Mammary epithelial cell (primary cell): ENCODE measurements at regions of chr9 and their contacts with region 1.

Region 1: DNA sequence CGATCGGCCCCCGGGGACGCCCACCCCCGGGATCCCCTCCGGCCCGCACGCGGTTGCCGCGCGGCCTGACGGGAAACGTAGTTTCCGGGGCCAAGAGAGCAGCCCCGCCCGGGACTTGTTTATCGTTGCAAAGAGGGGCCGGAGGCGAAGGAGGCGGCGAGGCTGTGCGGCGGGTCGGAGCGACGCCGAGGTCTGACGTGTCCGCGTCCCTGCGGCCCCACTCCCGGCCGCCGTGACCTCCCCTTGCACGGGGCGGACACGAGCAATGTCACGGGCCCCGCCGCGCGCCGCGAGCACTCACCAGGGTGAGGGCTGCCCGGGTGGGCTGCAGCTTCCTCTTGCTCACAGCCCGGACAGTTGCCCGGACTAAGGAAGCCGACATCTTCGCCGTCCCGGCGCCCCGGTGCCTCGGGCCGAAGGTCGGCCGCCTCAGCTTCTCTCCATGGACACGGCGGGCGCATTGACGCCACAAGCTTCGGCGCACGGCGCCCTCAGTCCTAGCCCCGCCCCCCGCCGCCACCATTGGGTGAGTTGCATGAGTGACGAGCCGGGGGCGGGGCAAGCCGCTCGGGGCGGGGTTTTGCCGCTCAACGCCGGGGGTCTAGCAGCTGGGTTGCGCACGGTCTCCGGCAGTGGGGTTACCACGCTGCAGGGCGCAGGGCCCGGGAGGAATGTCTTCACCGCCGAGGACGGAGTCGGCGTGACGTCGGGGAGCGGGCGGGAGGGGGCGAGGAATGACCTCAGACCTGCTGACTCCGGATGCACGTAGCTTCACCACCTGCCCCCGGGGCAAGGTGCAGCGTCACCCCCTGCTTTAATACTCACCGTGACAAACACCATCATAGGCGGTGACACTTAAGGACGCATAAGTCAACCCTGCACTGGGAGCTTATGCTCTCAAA is at the start of gene ISCA1:
- DNase-seq: peak; percentile 90
- H3K4me3 ChIP-seq: peak within 1 kb of the TSS; percentile 88 to 99 (median 99)
- H3K27ac ChIP-seq: peak within 1 kb of the TSS; percentile 88
- H3K4me1 ChIP-seq: peaks cover 11% of the 10 kb centered on the region
- H3K27me3 ChIP-seq: no peaks in the 10 kb centered on the region
- CTCF ChIP-seq: no peak
- total RNA-seq, gene ISCA1: 20.8 to 32.0 TPM

Region 2: GRCh38 chr9:85741875-85742629 is 540.3 kb before region 1 on chr9 and contains the start of gene AGTPBP1:
- CTCF ChIA-PET with region 1: no interaction called
- dilution Hi-C with region 1: no loop called
- in situ Hi-C with region 1: no loop called
- intact Hi-C with region 1: loop called (anchors 5 kb)
- DNase-seq: peak; percentile 92
- H3K4me3 ChIP-seq: peak within 1 kb of the TSS; percentile 71 to 91 (median 77)
- H3K27ac ChIP-seq: peak within 1 kb of the TSS; percentile 80
- H3K4me1 ChIP-seq: peaks cover 16% of the 10 kb centered on the region
- H3K27me3 ChIP-seq: peaks cover 2% of the 10 kb centered on the region
- CTCF ChIP-seq: no peak
- total RNA-seq, gene AGTPBP1: 12.9 to 18.3 TPM

Region 3: DNA sequence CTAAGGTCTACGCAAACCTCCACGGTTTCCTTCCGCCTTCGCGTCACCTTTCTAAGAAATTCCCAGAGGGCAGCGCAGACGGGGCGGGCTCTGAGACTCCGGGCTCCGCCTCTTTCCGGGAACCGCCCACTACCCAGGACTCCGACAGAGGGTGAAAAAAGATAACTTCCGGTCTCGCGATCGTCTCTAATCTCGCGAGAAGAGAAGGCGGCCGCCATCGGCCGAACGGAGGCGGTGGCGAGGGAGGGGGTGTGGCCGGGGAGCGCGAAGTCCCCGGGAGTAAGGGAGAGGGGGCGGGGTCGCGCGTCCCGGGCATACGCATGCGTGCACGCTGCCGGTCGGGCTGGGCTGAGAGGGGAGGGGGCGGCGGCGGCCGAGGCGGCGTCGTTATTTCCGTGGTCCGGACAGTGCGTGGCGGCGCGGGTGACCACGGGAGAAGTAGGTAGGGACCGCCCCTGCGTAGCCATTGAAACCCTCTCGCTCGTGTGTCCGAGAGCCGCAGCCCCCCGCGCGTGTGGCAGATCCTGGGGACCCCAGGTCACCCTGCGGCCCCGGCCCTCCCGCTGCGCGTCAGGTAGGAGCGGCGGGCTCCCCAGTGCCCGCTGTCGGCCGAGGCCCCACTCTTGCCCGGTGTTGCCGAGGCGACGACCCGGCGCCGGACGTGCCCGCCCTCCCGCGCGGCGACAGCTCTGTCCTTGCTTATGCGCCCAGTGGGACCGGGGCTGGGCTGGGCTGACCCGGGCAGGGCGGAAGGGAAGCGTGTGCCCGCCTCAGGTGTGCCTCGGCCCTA is 341.3 kb before region 1 on chr9 and contains the start of gene NAA35:
- CTCF ChIA-PET with region 1: no interaction called
- dilution Hi-C with region 1: no loop called
- in situ Hi-C with region 1: no loop called
- intact Hi-C with region 1: loop called (anchors 10 kb)
- DNase-seq: peak; percentile 98
- H3K4me3 ChIP-seq: peak within 1 kb of the TSS; percentile 77 to 94 (median 84)
- H3K27ac ChIP-seq: peak within 1 kb of the TSS; percentile 82
- H3K4me1 ChIP-seq: peaks cover 22% of the 10 kb centered on the region
- H3K27me3 ChIP-seq: no peaks in the 10 kb centered on the region
- CTCF ChIP-seq: no peak
- total RNA-seq, gene NAA35: 37.7 to 38.0 TPM

Region 4: GRCh38 chr9:86135371-86135770 is 147.0 kb before region 1 on chr9:
- CTCF ChIA-PET with region 1: no interaction called
- dilution Hi-C with region 1: no loop called
- in situ Hi-C with region 1: no loop called
- intact Hi-C with region 1: no loop called
- DNase-seq: no peak
- H3K4me3 ChIP-seq: no peak overlapping the region
- H3K27ac ChIP-seq: no peak overlapping the region
- H3K4me1 ChIP-seq: no peaks in the 10 kb centered on the region
- H3K27me3 ChIP-seq: no peaks in the 10 kb centered on the region
- CTCF ChIP-seq: no peak

Region 5: GRCh38 chr9:86187121-86187520 is 95.2 kb before region 1 on chr9:
- CTCF ChIA-PET with region 1: no interaction called
- dilution Hi-C with region 1: no loop called
- in situ Hi-C with region 1: no loop called
- intact Hi-C with region 1: no loop called
- DNase-seq: no peak
- H3K4me3 ChIP-seq: no peak overlapping the region
- H3K27ac ChIP-seq: no peak overlapping the region
- H3K4me1 ChIP-seq: no peaks in the 10 kb centered on the region
- H3K27me3 ChIP-seq: no peaks in the 10 kb centered on the region
- CTCF ChIP-seq: peak in 1 of 2 donors; percentile 13

Region 6: DNA sequence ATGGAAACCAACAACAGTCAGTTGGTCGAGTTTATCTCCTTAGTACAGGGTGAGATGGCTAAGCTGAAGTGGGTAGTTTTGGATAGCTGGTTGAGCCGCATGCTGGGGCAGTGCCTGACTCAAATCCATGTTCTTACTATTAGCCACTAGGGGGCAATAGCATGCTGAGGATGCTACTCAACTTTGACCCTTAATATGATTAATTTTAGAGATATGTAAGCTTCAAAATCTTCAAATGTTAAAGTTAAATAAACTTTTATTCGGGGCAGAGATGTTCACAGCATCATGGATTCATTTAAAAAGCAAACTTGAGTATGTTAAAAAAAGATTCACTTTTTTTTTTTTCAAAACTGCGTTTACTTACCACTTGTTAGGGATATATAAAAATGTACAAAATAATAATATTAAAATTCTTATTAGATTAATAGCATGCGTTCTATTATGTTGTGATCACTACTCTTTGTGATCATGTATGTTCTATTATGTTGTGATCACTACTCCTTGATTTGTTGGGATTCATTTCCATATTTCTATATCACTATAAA is 79.9 kb before region 1 on chr9:
- CTCF ChIA-PET with region 1: no interaction called
- dilution Hi-C with region 1: no loop called
- in situ Hi-C with region 1: no loop called
- intact Hi-C with region 1: loop called (anchors 5 kb)
- DNase-seq: peak; percentile 25
- H3K4me3 ChIP-seq: no peak overlapping the region
- H3K27ac ChIP-seq: no peak overlapping the region
- H3K4me1 ChIP-seq: no peaks in the 10 kb centered on the region
- H3K27me3 ChIP-seq: no peaks in the 10 kb centered on the region
- CTCF ChIP-seq: peak; percentile 82 to 86

Region 7: GRCh38 chr9:86405926-86406325 is 123.6 kb after region 1 on chr9:
- CTCF ChIA-PET with region 1: no interaction called
- dilution Hi-C with region 1: no loop called
- in situ Hi-C with region 1: no loop called
- intact Hi-C with region 1: loop called (anchors 5 kb)
- DNase-seq: peak; percentile 96
- H3K4me3 ChIP-seq: peak overlapping the region; percentile 4 to 15 (median 14)
- H3K27ac ChIP-seq: peak overlapping the region; percentile 93
- H3K4me1 ChIP-seq: peaks cover 34% of the 10 kb centered on the region
- H3K27me3 ChIP-seq: no peaks in the 10 kb centered on the region
- CTCF ChIP-seq: no peak

Region 8: GRCh38 chr9:86714999-86715398 is 432.7 kb after region 1 on chr9:
- CTCF ChIA-PET with region 1: no interaction called
- dilution Hi-C with region 1: no loop called
- in situ Hi-C with region 1: no loop called
- intact Hi-C with region 1: no loop called
- DNase-seq: no peak
- H3K4me3 ChIP-seq: no peak overlapping the region
- H3K27ac ChIP-seq: no peak overlapping the region
- H3K4me1 ChIP-seq: no peaks in the 10 kb centered on the region
- H3K27me3 ChIP-seq: no peaks in the 10 kb centered on the region
- CTCF ChIP-seq: no peak